Esophagus muscularis mucosa (tissue), 4 donors: ENCODE measurements at regions of chr19 and their contacts with region 1.

Region 1: GRCh38 chr19:43983912-43984686 is at the start of gene ZNF155:
- DNase-seq: peak; percentile 98
- H3K4me3 ChIP-seq: peak within 1 kb of the TSS; percentile 68 to 73 (median 71)
- H3K27ac ChIP-seq: peak within 1 kb of the TSS; percentile 78 to 84 (median 82)
- H3K4me1 ChIP-seq: peaks cover 4 to 17% (median 13%) of the 10 kb centered on the region in 4 donors
- H3K27me3 ChIP-seq: no peaks in the 10 kb centered on the region
- CTCF ChIP-seq: no peak
- EP300 ChIP-seq: no peak
- POLR2A ChIP-seq: no peak
- total RNA-seq, gene ZNF155: 5.3 to 6.2 (median 5.9) TPM

Region 2: GRCh38 chr19:43934985-43935708 is 49.0 kb before region 1 on chr19 and contains the start of gene ZNF45:
- intact Hi-C with region 1: loop called (anchors 10 kb)
- DNase-seq: peak; percentile 97
- H3K4me3 ChIP-seq: peak within 1 kb of the TSS; percentile 62 to 66 (median 66)
- H3K27ac ChIP-seq: peak within 1 kb of the TSS; percentile 80 to 89 (median 84)
- H3K4me1 ChIP-seq: peaks cover 16 to 24% (median 18%) of the 10 kb centered on the region in 4 donors
- H3K27me3 ChIP-seq: no peaks in the 10 kb centered on the region
- CTCF ChIP-seq: no peak
- EP300 ChIP-seq: no peak
- POLR2A ChIP-seq: no peak
- total RNA-seq, gene ZNF45: 10.1 to 13.1 (median 12.5) TPM

Region 3: GRCh38 chr19:44002566-44003460 is 18.7 kb after region 1 on chr19 and contains the start of gene ZNF230:
- intact Hi-C with region 1: loop called (anchors 2 kb)
- DNase-seq: peak; percentile 96
- H3K4me3 ChIP-seq: peak within 1 kb of the TSS; percentile 65 to 79 (median 74)
- H3K27ac ChIP-seq: peak within 1 kb of the TSS; percentile 75 to 83 (median 80)
- H3K4me1 ChIP-seq: peaks cover 12 to 18% (median 14%) of the 10 kb centered on the region in 4 donors
- H3K27me3 ChIP-seq: no peaks in the 10 kb centered on the region
- CTCF ChIP-seq: peak in 1 of 3 experiments; percentile 18
- EP300 ChIP-seq: no peak
- POLR2A ChIP-seq: no peak
- total RNA-seq, gene ZNF230: 2.7 to 7.5 (median 3.5) TPM